ENCODE measurements at regions of chr1 and their contacts with region 1.

Region 1: GRCh38 chr1:45508295-45509151 is 8.4 kb downstream of the MMACHC start:
- DNase-seq: no peak
- CTCF ChIP-seq: no peak

Region 2: DNA sequence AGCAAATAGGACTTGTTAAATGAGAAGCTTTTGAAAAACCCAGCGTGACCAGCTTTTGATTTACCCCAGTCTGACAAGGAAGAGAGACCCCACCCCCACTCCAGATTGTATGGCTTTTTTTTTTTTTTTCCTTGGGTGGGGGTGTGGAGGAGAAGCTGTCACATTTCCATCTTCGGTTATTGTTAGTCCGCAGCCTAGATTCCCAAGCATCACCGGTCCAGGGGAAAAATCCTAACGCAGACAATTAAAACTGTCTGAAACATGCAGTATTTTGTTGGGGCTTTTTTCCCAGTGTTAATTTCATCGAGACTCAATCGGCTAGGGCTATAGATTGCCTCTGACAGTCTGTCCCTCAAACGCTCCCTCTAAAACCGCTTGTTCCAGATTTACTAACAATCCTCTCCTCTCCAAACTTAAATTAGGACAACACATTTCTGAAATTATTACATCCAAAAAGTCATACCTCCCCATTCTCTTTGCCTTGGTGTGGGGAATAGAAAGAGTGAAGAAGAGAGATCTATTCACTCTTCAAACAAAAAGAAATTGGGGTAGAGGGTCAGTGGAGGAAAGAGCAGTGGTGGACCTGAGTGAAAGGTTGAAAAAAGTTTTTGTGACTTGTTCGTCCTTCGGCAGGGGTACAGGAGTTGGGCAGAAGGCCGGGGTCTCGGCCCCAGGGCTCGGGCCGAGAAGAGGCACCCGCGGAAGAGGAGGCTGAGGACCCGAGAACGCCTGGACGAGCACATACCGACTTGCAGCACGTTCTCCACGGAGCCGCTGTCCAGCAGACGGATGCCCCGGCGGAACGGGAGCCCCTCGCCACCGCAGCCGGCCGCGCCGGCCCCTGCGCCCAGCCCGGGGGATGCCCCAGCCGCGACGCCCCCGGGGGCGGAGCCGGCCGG is 303.3 kb before region 1 on chr1:
- in situ Hi-C with region 1: no loop called
- DNase-seq: peak; percentile 34
- CTCF ChIP-seq: no peak

Region 3: DNA sequence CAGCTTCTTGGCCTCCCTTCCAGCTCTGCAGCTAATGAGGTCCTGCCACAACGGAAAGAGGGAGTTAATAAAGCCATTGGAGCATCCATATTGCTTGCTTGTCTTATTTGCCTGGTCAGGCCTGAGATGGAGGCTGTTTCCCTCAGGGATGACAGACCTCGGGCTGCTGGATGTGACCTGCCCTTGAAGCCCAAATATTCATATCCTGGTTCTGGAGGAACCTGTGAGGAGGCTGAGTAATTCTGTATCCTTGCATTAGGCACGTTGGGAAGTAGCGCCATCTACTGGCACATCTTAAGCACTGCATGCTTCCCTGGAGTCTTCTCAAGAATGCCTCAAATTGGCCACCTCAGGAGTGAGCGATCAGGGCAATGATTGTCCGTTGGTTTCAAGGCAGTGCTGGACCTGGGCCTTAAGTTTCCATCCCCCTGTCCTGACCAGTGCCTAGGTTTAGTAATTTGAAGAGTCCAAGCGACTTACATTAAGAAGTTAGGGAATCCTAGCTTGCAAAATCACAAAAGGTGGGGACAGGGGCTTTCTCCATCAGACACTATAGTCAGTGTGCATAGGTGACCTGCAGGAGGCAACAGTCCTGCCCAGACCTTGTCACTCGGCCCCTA is 61.5 kb after region 1 on chr1:
- in situ Hi-C with region 1: loop called (anchors 5 kb)
- DNase-seq: peak; percentile 70
- CTCF ChIP-seq: peak; percentile 98

Measured in GM13977 (cell line).